Spleen (tissue), 13 donors: ENCODE measurements at regions of chr2 and their contacts with region 1.

Region 1: GRCh38 chr2:223993621-223994232 is 36.5 kb downstream of the MRPL44 start:
- DNase-seq: no peak
- H3K4me3 ChIP-seq: no peak overlapping the region
- H3K27ac ChIP-seq: no peak overlapping the region
- H3K4me1 ChIP-seq: peaks cover 0 to 7% (median 0%) of the 10 kb centered on the region in 6 donors
- H3K27me3 ChIP-seq: no peaks in the 10 kb centered on the region
- CTCF ChIP-seq: peak; percentile 67 to 87 (median 80)
- POLR2A ChIP-seq: no peak

Region 2: DNA sequence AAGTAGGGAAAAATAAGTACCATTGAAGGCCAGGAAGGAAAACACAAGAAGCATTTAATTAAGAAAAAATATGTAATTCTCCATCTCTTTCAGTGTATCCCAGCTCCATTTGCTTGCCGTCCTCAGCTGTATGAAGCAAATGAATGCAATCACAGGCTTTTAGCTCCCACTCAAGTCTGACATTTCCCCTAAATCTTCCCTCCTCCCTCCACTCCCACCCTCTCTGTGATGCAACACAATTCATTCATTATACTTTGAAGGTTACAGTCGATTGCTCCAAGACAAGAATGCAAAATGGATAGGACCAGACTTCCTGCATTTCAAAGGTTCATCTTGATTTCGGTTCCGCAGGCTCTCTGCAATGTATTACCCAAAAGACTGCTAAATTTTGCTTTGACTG is 218.1 kb after region 1 on chr2:
- intact Hi-C with region 1: no loop called
- DNase-seq: no peak
- H3K4me3 ChIP-seq: no peak overlapping the region
- H3K27ac ChIP-seq: no peak overlapping the region
- H3K4me1 ChIP-seq: peaks cover 0 to 4% (median 0%) of the 10 kb centered on the region in 6 donors
- H3K27me3 ChIP-seq: peaks cover 0 to 14% (median 0%) of the 10 kb centered on the region in 7 donors
- CTCF ChIP-seq: no peak
- POLR2A ChIP-seq: no peak

Region 3: GRCh38 chr2:224284134-224284946 is 290.6 kb after region 1 on chr2:
- intact Hi-C with region 1: loop called (anchors 2 kb)
- DNase-seq: no peak
- H3K4me3 ChIP-seq: no peak overlapping the region
- H3K27ac ChIP-seq: no peak overlapping the region
- H3K4me1 ChIP-seq: no peaks in the 10 kb centered on the region
- H3K27me3 ChIP-seq: peaks cover 0 to 28% (median 0%) of the 10 kb centered on the region in 7 donors
- CTCF ChIP-seq: peak in 8 of 11 experiments; percentile 37 to 68 (median 42)
- POLR2A ChIP-seq: no peak